ENCODE measurements at regions of chr10 and their contacts with region 1.

Region 1: GRCh38 chr10:86261941-86262687 is 104.5 kb downstream of the GRID1 start:
- DNase-seq: peak; percentile 43 to 67
- H3K4me3 ChIP-seq: no peak overlapping the region
- H3K27ac ChIP-seq: no peak overlapping the region
- H3K4me1 ChIP-seq: peaks cover 0 to 12% (median 7%) of the 10 kb centered on the region in 4 experiments; a peak in 6 of 7 replicates
- H3K27me3 ChIP-seq: peaks cover 0 to 10% (median 4%) of the 10 kb centered on the region in 4 experiments; a peak in 5 of 7 replicates
- CTCF ChIP-seq: peak; percentile 74 to 83 (median 74)
- EP300 ChIP-seq: no peak
- POLR2A ChIP-seq: no peak
- RAD21 ChIP-seq: peak; percentile 75 to 80

Region 2: DNA sequence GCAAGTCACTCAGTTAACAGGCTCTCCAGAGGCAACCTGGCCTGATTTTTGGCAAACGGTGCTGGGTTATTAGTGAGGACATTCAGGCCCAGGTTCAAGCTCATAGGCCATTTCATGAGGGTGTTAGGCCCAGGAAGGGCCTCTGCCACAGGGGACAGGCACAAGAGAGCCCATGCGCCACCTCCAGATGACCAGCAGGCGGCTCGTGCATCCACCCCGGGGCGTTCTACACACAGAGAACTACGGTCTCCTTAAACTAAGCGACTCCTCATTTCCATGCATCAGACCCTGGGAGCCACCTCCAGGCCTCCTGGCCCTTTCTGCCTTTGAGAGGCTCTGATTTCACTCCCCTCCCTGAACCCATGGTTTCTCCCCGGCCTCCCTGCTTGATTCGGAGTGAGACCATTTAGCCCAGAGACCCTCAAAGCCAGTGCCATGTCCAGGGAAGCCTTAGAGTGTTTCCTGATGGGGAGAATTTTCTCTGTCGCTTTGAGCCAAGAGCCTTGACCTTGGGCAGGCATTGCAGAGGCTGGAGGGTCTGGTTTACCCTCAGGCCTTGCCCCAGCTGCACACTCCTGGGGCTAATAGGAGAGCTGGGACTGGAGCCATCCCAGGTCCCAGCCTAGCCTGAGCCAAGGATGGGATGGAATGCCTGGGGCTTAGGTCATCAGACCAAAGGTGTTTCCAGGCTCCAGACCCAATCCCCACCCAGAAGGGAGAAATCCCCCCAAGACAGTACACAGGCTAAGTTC is 83.5 kb before region 1 on chr10:
- CTCF ChIA-PET with region 1: interaction called, 42 read pairs
- POLR2A ChIA-PET with region 1: no interaction called
- DNase-seq: peak; percentile 47 to 83
- H3K4me3 ChIP-seq: no peak overlapping the region
- H3K27ac ChIP-seq: no peak overlapping the region
- H3K4me1 ChIP-seq: no peaks in the 10 kb centered on the region
- H3K27me3 ChIP-seq: no peaks in the 10 kb centered on the region; a peak in 1 of 7 replicates
- CTCF ChIP-seq: peak; percentile 87 to 95 (median 90)
- EP300 ChIP-seq: no peak
- POLR2A ChIP-seq: no peak
- RAD21 ChIP-seq: peak; percentile 81 to 88

Region 3: GRCh38 chr10:86291616-86292340 is 29.7 kb after region 1 on chr10:
- CTCF ChIA-PET with region 1: interaction called, 137 read pairs
- POLR2A ChIA-PET with region 1: no interaction called
- DNase-seq: peak in 1 of 2 experiments; percentile 68
- H3K4me3 ChIP-seq: no peak overlapping the region
- H3K27ac ChIP-seq: no peak overlapping the region
- H3K4me1 ChIP-seq: peaks cover 0 to 19% (median 15%) of the 10 kb centered on the region in 4 experiments; a peak in 6 of 7 replicates
- H3K27me3 ChIP-seq: peaks cover 0 to 4% (median 2%) of the 10 kb centered on the region in 4 experiments; a peak in 3 of 7 replicates
- CTCF ChIP-seq: peak; percentile 38 to 58 (median 45); a peak in 3 of 4 replicates
- EP300 ChIP-seq: no peak
- POLR2A ChIP-seq: no peak
- RAD21 ChIP-seq: peak; percentile 27 to 50

Region 4: DNA sequence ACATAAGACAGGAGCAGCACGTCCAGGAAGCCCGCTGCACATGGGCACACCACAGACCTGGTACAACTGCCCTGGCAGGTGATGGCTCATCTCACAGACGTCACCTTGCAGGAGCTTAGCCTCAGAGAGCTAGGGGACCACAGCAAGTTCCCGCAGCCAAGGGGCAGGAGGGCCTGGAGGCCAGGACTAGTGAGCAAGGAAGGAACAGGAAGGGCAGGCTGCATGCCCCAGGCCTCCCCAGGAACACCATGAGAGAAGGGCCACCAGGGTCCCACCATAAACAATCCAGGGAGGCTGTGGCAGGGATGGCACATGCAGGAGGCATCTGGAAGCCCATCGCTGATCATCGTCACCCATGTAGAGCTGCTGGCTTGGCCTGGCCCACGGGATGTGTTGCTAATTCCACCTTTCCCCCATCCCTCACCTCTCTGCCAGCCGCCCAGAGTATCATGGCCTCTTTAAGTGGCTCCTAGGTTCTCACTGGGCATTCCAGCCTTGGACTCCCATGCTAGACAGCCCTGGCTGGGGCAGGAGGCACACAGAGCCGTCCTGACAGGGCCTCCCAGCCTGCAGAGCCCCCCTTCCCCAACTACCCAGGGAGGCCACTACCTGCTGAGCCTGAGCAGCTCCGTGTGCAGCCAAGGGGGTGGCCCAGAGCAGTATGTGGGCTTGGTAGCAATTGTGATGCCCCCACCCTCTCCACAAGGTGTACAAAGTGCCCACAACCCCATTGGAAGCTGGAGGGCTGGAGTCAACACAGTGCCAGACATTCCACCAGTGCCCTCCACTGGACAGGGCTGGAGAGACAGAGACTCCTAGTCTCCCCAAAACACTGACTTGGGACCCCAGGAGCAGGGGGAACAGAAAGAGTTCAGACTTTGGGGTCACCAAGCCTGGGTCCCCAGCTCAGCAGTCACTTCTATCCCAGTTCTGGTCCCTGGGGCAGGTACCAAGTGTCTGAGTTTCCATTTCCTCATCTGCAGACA is 69.0 kb after region 1 on chr10:
- CTCF ChIA-PET with region 1: interaction called, 13 read pairs
- POLR2A ChIA-PET with region 1: no interaction called
- DNase-seq: no peak
- H3K4me3 ChIP-seq: no peak overlapping the region
- H3K27ac ChIP-seq: no peak overlapping the region
- H3K4me1 ChIP-seq: no peaks in the 10 kb centered on the region; a peak in 1 of 7 replicates
- H3K27me3 ChIP-seq: no peaks in the 10 kb centered on the region
- CTCF ChIP-seq: peak; percentile 43 to 52 (median 46); a peak in 3 of 4 replicates
- EP300 ChIP-seq: no peak
- POLR2A ChIP-seq: no peak
- RAD21 ChIP-seq: peak; percentile 59 to 75

Region 5: DNA sequence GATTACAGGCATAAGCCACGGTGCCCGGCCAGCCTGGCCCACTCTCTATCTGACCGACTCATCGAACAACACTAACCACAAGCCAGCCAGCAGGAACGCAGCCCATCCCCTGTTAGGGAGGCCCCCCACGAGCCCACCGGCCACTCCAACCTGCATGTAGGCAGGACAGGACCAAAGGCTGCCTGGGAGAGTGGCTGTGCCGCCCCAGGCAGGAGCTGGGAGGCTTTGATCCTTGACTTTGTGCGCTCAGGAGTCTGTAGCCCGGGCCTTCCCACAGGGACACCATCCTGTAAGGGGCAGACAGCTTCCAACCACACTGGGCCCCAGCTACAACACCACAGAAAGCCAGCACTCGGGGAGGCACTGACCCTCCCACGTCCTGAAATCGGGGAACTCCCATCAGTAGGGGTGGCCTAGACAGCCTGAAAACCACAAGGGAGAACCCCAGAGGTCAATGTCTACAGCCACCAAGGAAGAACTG is 75.0 kb after region 1 on chr10:
- CTCF ChIA-PET with region 1: interaction called, 11 read pairs
- POLR2A ChIA-PET with region 1: no interaction called
- DNase-seq: no peak
- H3K4me3 ChIP-seq: no peak overlapping the region
- H3K27ac ChIP-seq: no peak overlapping the region
- H3K4me1 ChIP-seq: peaks cover 3 to 16% (median 11%) of the 10 kb centered on the region in 4 experiments; a peak in 6 of 7 replicates
- H3K27me3 ChIP-seq: 0 out of 7 replicates have a peak, but pooled peaks cover 0 to 3% (median 0%) of the 10 kb centered on the region in 4 experiments
- CTCF ChIP-seq: no peak
- EP300 ChIP-seq: no peak
- POLR2A ChIP-seq: no peak
- RAD21 ChIP-seq: no peak

Measured in H1 (cell line).